ENCODE measurements at regions of chr12 and their contacts with region 1.

Region 1: DNA sequence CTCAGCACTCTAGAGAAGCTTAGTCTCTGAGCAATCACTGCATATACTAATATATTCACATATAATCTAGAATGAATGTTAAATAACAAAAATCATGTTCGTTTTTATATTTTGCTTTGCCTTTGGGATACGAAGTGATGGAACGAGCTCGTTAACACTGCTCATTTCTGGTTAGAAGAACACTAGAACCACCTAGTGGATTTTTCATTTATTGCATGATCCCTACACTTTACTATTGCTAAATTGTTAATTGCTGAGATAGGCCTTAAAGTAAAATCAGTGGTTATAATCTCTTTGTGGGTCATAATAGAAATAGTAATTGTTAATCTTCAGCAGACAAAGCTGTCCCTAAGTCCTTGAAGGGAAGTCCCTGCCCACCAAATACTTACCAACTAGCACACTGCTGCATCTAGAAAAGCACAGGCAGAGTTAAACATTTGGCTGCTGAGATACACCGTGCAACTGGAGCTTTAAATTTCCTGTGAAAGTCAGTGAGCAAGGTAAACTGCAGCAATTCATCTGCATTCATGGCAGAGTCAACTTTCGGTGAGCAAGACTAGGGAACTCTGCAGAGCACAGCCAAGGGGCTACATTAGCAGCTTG is 353.7 kb downstream of the APAF1 start:
- DNase-seq: peak; percentile 60
- CTCF ChIP-seq: peak; percentile 56

Region 2: GRCh38 chr12:98572010-98572409 is 426.8 kb before region 1 on chr12:
- in situ Hi-C with region 1: loop called (anchors 25 kb)
- DNase-seq: no peak
- CTCF ChIP-seq: no peak

Region 3: DNA sequence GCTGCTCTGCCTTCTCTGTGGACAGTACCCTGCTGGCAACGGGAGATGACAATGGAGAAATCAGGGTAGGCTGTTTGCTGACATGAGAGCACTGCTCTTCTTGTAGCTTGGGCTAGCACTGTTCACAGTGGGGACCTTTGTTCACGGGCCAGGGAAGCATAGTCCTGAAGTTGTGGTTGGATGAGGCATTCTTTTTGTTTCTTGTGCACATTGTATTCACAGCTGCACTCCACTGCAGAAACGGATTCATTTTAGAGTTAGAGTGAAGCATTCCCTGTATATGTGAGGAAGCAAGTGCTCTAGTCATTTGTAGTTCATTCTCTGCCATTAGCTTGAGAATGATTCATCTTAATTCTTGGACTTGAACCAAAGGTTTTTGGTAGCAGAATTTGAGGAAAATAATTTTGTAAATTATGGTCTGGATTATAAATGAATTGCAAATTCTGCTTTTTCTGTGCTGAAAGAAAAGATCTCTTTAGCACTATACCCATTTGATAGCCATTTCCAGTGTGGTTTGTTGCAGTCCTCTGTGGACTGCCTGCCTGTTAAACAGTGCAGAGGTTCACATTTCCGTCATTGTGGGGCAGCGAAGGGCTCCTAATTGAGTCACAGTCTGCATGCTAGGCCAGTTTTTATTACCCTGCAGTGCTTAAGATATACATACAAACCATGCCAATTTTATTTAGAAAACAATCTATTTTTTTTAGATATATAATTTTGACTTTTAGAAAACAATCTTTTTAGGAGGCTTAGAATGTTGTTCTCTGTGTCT is 273.1 kb before region 1 on chr12:
- in situ Hi-C with region 1: loop called (anchors 25 kb)
- DNase-seq: peak; percentile 54
- CTCF ChIP-seq: peak; percentile 22